Mammary epithelial cell (primary cell): ENCODE measurements at regions of chr22 and their contacts with region 1.

Region 1: DNA sequence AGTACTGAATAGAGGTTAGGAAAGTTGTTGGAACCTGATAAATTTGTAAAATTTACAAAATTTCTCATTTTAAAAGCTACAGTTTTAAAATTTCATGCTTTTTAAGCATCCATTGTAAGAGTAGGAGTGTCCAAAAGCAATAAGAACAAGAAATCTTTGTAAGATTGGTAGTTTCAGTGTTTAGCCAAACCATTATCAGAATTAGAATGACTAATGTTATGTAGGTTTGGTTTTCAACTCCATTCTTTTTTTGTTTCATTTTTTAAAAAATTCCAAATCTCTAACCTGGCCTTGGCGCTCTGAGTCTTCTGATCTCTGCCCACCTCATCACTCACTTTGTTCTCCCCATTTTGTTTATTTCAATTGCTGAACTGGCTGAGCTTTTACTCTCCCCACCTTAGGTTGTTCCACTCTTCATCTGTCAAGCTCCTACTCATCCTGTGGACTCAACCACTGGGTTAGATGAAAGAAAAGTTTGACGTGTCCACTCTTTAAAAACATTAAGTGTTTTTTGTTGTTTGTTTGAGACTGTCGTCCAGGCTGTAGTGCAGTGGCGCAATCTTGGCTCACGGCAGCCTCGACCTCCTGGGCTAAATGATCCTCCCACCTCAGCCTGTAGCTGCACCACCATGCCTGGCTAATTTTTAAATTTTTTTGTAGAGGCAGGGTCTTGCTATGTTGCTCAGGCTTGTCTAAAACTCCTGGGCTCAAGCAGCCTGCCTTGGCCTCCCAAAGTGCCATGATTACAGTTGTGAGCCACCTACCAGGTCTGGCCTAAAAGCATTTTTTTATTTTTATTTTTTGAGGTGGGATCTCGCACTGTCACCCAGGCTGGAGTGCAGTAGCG is 14.0 kb downstream of the EP300 start:
- DNase-seq: peak; percentile 9
- H3K4me3 ChIP-seq: no peak overlapping the region
- H3K27ac ChIP-seq: no peak overlapping the region
- H3K4me1 ChIP-seq: no peaks in the 10 kb centered on the region
- H3K27me3 ChIP-seq: no peaks in the 10 kb centered on the region
- CTCF ChIP-seq: no peak

Region 2: DNA sequence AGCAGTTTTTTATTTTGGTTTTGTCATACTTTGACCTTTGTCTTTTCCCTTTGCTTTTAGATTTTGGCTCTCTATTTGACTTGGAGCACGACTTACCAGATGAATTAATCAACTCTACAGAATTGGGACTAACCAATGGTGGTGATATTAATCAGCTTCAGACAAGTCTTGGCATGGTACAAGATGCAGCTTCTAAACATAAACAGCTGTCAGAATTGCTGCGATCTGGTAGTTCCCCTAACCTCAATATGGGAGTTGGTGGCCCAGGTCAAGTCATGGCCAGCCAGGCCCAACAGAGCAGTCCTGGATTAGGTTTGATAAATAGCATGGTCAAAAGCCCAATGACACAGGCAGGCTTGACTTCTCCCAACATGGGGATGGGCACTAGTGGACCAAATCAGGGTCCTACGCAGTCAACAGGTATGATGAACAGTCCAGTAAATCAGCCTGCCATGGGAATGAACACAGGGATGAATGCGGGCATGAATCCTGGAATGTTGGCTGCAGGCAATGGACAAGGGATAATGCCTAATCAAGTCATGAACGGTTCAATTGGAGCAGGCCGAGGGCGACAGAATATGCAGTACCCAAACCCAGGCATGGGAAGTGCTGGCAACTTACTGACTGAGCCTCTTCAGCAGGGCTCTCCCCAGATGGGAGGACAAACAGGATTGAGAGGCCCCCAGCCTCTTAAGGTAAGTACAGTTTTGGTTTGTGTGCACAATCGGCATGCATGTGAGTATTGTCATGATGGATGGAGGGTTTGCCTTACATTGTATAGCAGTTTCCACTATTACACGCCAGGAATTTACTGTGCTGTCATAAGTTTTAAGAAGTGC is 11.0 kb after region 1 on chr22:
- CTCF ChIA-PET with region 1: no interaction called
- dilution Hi-C with region 1: no loop called
- in situ Hi-C with region 1: no loop called
- intact Hi-C with region 1: loop called (anchors 1 kb)
- DNase-seq: no peak
- H3K4me3 ChIP-seq: no peak overlapping the region
- H3K27ac ChIP-seq: no peak overlapping the region
- H3K4me1 ChIP-seq: no peaks in the 10 kb centered on the region
- H3K27me3 ChIP-seq: no peaks in the 10 kb centered on the region
- CTCF ChIP-seq: no peak